Panc1 (cell line): ENCODE measurements at regions of chr5 and their contacts with region 1.

Region 1: GRCh38 chr5:82225525-82226172 is 52.5 kb downstream of the RPS23 start:
- DNase-seq: peak; percentile 63
- ATAC-seq: peak; percentile 93
- H3K4me3 ChIP-seq: no peak overlapping the region
- H3K27ac ChIP-seq: no peak overlapping the region
- H3K4me1 ChIP-seq: no peaks in the 10 kb centered on the region; the same call in 1 of the 2 replicates
- H3K27me3 ChIP-seq: no peaks in the 10 kb centered on the region
- CTCF ChIP-seq: peak; percentile 92

Region 2: GRCh38 chr5:81425569-81425968 is 800.1 kb before region 1 on chr5:
- CTCF ChIA-PET with region 1: no interaction called
- POLR2A ChIA-PET with region 1: no interaction called
- in situ Hi-C with region 1: no loop called
- intact Hi-C with region 1: loop called (anchors 10 kb)
- DNase-seq: no peak
- ATAC-seq: no peak
- H3K4me3 ChIP-seq: no peak overlapping the region
- H3K27ac ChIP-seq: no peak overlapping the region
- H3K4me1 ChIP-seq: peaks cover 27% of the 10 kb centered on the region
- H3K27me3 ChIP-seq: no peaks in the 10 kb centered on the region
- CTCF ChIP-seq: peak; percentile 61; the same call in 1 of the 2 replicates

Region 3: GRCh38 chr5:81506900-81507588 is 718.6 kb before region 1 on chr5:
- CTCF ChIA-PET with region 1: no interaction called
- POLR2A ChIA-PET with region 1: no interaction called
- in situ Hi-C with region 1: no loop called
- intact Hi-C with region 1: loop called (anchors 5 kb)
- DNase-seq: peak; percentile 85
- ATAC-seq: peak; percentile 99
- H3K4me3 ChIP-seq: no peak overlapping the region
- H3K27ac ChIP-seq: no peak overlapping the region
- H3K4me1 ChIP-seq: no peaks in the 10 kb centered on the region
- H3K27me3 ChIP-seq: no peaks in the 10 kb centered on the region
- CTCF ChIP-seq: peak; percentile 85

Region 4: DNA sequence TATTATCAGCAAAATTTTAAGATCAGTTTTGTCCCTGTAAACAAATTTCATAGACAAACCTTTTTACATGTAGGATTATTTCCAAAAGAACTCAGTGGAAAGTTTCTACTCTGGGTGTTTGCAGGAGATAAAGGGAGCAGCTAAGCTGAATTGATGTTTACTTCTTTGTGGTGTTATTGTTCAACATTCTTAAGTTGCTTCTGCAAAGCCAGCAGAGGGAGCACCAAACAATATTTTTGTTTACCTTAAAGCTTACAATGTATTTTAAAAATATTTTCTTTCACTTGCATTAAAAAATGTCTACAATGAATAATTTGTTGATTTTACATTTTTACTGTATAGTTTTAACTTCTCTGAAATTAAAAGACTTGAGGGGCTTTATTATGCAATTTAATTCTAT is 118.4 kb before region 1 on chr5:
- CTCF ChIA-PET with region 1: no interaction called
- POLR2A ChIA-PET with region 1: no interaction called
- in situ Hi-C with region 1: no loop called
- intact Hi-C with region 1: loop called (anchors 2 kb)
- DNase-seq: peak; percentile 12
- ATAC-seq: no peak
- H3K4me3 ChIP-seq: no peak overlapping the region
- H3K27ac ChIP-seq: no peak overlapping the region
- H3K4me1 ChIP-seq: peaks cover 10% of the 10 kb centered on the region
- H3K27me3 ChIP-seq: no peaks in the 10 kb centered on the region
- CTCF ChIP-seq: peak; percentile 64; the same call in 1 of the 2 replicates

Region 5: GRCh38 chr5:82174128-82174918 is 51.3 kb before region 1 on chr5:
- CTCF ChIA-PET with region 1: no interaction called
- POLR2A ChIA-PET with region 1: no interaction called
- in situ Hi-C with region 1: no loop called
- intact Hi-C with region 1: loop called (anchors 1 kb)
- DNase-seq: no peak
- ATAC-seq: peak; percentile 78; the same call in 1 of the 2 replicates
- H3K4me3 ChIP-seq: no peak overlapping the region
- H3K27ac ChIP-seq: no peak overlapping the region
- H3K4me1 ChIP-seq: no peaks in the 10 kb centered on the region
- H3K27me3 ChIP-seq: no peaks in the 10 kb centered on the region
- CTCF ChIP-seq: peak; percentile 81